ENCODE measurements at regions of chr9 and their contacts with region 1.

Region 1: GRCh38 chr9:20356403-20357035 is 265.8 kb downstream of the MLLT3 start:
- DNase-seq: peak; percentile 81
- H3K4me3 ChIP-seq: peak overlapping the region in 3 of 4 donors; percentile 19 to 24 (median 24)
- H3K27ac ChIP-seq: peak overlapping the region; percentile 49 to 76 (median 60)
- H3K4me1 ChIP-seq: peaks cover 0 to 45% (median 28%) of the 10 kb centered on the region in 4 donors
- H3K27me3 ChIP-seq: no peaks in the 10 kb centered on the region
- CTCF ChIP-seq: peak; percentile 26 to 69 (median 40)
- EP300 ChIP-seq: no peak
- POLR2A ChIP-seq: no peak

Region 2: GRCh38 chr9:20558566-20559016 is 202.1 kb after region 1 on chr9:
- intact Hi-C with region 1: loop called (anchors 10 kb)
- DNase-seq: no peak
- H3K4me3 ChIP-seq: no peak overlapping the region
- H3K27ac ChIP-seq: peak overlapping the region; percentile 7 to 70 (median 60)
- H3K4me1 ChIP-seq: peaks cover 2 to 79% (median 68%) of the 10 kb centered on the region in 4 donors
- H3K27me3 ChIP-seq: no peaks in the 10 kb centered on the region
- CTCF ChIP-seq: no peak
- EP300 ChIP-seq: no peak
- POLR2A ChIP-seq: no peak

Region 3: GRCh38 chr9:20941174-20941690 is 584.7 kb after region 1 on chr9:
- intact Hi-C with region 1: loop called (anchors 1 kb)
- DNase-seq: peak; percentile 76
- H3K4me3 ChIP-seq: no peak overlapping the region
- H3K27ac ChIP-seq: no peak overlapping the region
- H3K4me1 ChIP-seq: peaks cover 0 to 11% (median 1%) of the 10 kb centered on the region in 4 donors
- H3K27me3 ChIP-seq: no peaks in the 10 kb centered on the region
- CTCF ChIP-seq: peak; percentile 67 to 82 (median 75)
- EP300 ChIP-seq: no peak
- POLR2A ChIP-seq: no peak

Region 4: DNA sequence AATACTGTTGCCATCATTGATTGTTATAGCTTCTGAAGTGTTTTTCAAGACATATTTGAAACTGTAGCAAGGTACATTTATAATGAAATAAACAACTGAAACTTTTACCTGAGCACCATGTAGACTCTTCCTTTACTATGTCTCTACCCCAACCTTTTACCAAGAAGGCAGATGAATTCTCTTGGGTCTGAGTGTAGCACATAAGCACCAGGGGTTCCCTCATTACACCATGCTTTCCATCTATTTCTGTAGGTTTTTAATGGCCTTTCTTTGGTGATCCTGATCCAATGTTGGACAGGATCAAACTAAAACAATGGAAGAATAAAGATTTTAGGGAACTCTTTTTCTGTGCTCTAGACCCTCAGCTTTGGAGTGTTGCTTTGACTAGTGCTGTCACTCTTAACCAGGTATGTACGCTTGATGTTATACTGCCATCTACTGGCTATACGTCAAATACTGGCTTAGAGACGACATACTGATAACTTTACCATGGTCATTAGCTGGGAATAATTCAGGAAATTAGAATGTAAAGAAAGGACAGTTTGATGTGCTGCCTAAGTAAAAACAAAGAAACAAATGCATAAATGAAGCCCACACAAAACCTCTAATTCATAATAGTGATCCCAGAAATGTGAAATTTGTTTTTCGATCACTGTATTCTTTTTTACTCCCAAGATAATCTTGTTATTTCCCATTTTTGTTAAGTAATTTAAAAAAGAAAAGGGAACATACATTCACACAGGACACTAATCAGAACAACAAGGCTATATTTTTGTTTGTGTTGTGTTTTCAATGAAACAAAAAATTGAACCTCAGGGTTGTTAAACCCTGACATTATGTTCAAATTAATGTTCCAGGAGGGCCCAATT is 754.4 kb after region 1 on chr9:
- intact Hi-C with region 1: loop called (anchors 5 kb)
- DNase-seq: no peak
- H3K4me3 ChIP-seq: no peak overlapping the region
- H3K27ac ChIP-seq: no peak overlapping the region
- H3K4me1 ChIP-seq: no peaks in the 10 kb centered on the region
- H3K27me3 ChIP-seq: no peaks in the 10 kb centered on the region
- CTCF ChIP-seq: peak; percentile 43 to 84 (median 68)
- EP300 ChIP-seq: no peak
- POLR2A ChIP-seq: no peak

Measured in sigmoid colon (tissue), 7 donors.